Activated T-helper 2 cell treated with anti-CD3 and anti-CD28 coated beads, Interferon-gamma antibody, Interleukin-2, Interleukin-4, amounts not matched to agents 10 μg/mL and 5 μg/mL and 100 μg/mL, durations not matched to agents 14 hours and 24 hours and 36 hours (primary cell): ENCODE measurements at regions of chr1 and their contacts with region 1.

Region 1: DNA sequence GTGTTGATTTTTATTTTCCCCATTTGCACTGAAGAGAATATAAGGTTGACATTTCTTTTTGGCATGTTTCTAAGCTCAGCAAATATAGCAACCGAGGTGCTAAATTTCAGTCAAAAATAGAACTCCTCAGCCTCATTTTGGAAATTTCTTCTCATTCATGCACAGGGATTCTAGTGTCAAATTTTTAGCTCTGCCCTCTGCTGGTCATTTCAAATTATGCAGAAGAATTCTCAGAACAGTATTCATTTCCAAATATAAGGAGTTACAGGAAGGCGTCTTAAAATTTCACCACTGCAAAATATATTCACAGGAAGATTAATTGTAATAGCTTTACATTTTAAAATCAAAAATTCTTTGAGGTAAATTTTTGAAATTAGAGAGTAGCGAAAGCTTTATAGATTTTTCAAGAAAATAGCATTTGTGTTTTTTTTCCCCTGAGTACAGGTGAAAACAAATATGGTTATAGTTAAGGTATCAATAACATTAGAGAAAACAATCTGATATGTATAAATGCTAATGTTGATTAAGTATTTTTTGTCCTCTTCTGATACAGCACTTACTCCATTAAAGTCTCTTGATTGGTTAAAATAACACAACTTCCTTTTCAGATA is 57.9 kb downstream of the FMN2 start:
- DNase-seq: no peak
- H3K4me3 Mint-ChIP-seq: no peak overlapping the region
- H3K27ac Mint-ChIP-seq: no peak overlapping the region
- H3K4me1 Mint-ChIP-seq: no peaks in the 10 kb centered on the region
- H3K27me3 Mint-ChIP-seq: no peaks in the 10 kb centered on the region

Region 2: DNA sequence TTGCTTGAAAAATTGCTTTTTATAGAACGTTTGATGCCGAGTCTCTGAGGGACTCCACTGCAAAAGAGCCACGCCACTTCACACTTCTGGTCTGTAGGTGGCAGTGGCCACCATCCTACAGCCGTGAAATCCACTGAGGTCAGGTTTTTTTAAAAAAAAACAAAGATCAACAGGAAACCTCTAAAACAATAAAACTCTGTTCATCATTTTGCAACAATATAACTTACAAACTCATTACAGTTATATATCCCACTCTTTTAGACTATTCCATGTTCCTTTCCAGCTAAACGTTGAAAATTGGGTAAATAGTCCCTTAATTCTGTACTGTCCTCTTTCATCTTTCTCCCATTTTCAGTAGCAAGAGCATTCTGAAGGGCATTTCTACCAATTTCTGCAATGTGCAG is 122.5 kb before region 1 on chr1:
- intact Hi-C with region 1: loop called (anchors 1 kb)
- DNase-seq: no peak
- H3K4me3 Mint-ChIP-seq: no peak overlapping the region
- H3K27ac Mint-ChIP-seq: no peak overlapping the region
- H3K4me1 Mint-ChIP-seq: no peaks in the 10 kb centered on the region
- H3K27me3 Mint-ChIP-seq: no peaks in the 10 kb centered on the region

Region 3: DNA sequence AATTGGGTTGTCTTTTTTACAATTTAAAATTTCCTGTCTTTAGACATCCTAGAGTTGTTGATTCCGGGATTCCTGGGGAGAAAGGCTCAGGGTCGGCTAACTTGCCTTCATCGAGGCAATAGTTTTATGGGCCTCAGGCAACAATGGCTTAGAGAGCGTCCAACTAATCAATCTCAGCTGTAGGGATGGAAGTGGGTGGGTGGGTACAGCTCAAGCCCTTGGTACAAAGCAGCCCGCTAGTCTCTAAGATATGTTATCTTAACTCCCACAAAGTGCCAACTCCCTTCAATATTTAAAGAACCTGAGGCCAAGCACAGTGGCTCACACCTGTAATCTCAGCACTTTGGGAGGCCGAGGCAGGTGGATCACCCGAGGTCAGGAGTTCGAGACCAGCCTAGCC is 64.8 kb before region 1 on chr1:
- intact Hi-C with region 1: no loop called
- DNase-seq: no peak
- H3K4me3 Mint-ChIP-seq: no peak overlapping the region
- H3K27ac Mint-ChIP-seq: no peak overlapping the region
- H3K4me1 Mint-ChIP-seq: no peaks in the 10 kb centered on the region
- H3K27me3 Mint-ChIP-seq: peaks cover 5% of the 10 kb centered on the region